CD4-positive, alpha-beta T cell (primary cell): ENCODE measurements at regions of chr3 and their contacts with region 1.

Region 1: GRCh38 chr3:195271116-195271858 is at the start of gene XXYLT1:
- DNase-seq: peak; percentile 82 to 94 (median 88)
- ATAC-seq: peak; percentile 84
- H3K4me3 ChIP-seq: peak within 1 kb of the TSS; percentile 69
- H3K4me3 Mint-ChIP-seq: peak within 1 kb of the TSS; percentile 95
- H3K27ac ChIP-seq: peak within 1 kb of the TSS in 1 of 2 donors; percentile 38
- H3K27ac Mint-ChIP-seq: peak within 1 kb of the TSS; percentile 80
- H3K4me1 ChIP-seq: peaks cover 31% of the 10 kb centered on the region
- H3K4me1 Mint-ChIP-seq: peaks cover 15% of the 10 kb centered on the region
- H3K27me3 ChIP-seq: no peaks in the 10 kb centered on the region
- H3K27me3 Mint-ChIP-seq: no peaks in the 10 kb centered on the region
- CTCF ChIP-seq: peak; percentile 88
- total RNA-seq, gene XXYLT1: 3.1 to 3.7 TPM

Region 2: DNA sequence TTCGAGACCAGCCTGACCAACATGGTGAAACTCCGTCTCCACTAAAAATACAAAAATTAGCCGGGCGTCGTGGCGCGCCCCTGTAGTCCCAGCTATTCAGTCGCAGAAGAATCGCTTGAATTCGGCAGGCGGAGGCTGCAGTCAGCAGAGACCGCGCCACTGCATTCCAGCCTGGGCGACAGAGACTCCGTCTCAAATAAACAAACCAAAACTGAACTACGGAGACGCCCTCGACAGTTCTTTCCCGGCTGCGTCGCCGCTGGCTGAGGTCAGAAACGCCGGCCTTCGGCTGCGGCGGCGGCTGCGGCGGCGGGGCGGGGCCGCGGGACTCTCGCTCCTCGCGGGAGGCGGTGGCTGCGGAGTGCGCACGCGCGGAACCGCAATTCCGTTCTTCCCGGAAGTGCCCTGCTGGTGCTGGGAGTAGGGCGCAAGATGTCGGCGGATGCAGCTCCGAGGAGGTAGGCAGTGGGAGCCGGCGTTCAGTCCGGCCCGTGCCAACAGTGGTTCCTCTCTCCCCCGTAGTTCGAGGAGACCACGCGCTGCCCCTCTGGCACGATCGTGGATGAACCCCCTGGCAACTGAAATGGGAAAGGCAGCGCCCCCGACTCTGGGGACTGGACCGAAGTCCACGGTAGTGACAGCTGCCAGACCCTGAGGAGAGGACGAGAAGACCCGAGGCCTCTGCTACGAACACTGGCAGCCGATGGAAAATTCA is 687.5 kb before region 1 on chr3:
- CTCF ChIA-PET with region 1: no interaction called
- POLR2A ChIA-PET with region 1: no interaction called
- intact Hi-C with region 1: loop called in 1 of 2 experiments (anchors 5 kb)
- DNase-seq: peak; percentile 84 to 96 (median 92)
- ATAC-seq: peak; percentile 94
- H3K4me3 ChIP-seq: peak overlapping the region; percentile 61
- H3K4me3 Mint-ChIP-seq: peak overlapping the region; percentile 94
- H3K27ac ChIP-seq: peak overlapping the region; percentile 68 to 69
- H3K27ac Mint-ChIP-seq: peak overlapping the region; percentile 95
- H3K4me1 ChIP-seq: peaks cover 14% of the 10 kb centered on the region
- H3K4me1 Mint-ChIP-seq: peaks cover 15% of the 10 kb centered on the region
- H3K27me3 ChIP-seq: no peaks in the 10 kb centered on the region
- H3K27me3 Mint-ChIP-seq: no peaks in the 10 kb centered on the region
- CTCF ChIP-seq: no peak

Region 3: GRCh38 chr3:195282961-195283360 is 11.7 kb after region 1 on chr3:
- CTCF ChIA-PET with region 1: interaction called, 19 read pairs
- POLR2A ChIA-PET with region 1: interaction called, 5 read pairs
- intact Hi-C with region 1: no loop called
- DNase-seq: no peak
- ATAC-seq: no peak
- H3K4me3 ChIP-seq: no peak overlapping the region
- H3K4me3 Mint-ChIP-seq: no peak overlapping the region
- H3K27ac ChIP-seq: no peak overlapping the region
- H3K27ac Mint-ChIP-seq: no peak overlapping the region
- H3K4me1 ChIP-seq: no peaks in the 10 kb centered on the region
- H3K4me1 Mint-ChIP-seq: peaks cover 5% of the 10 kb centered on the region
- H3K27me3 ChIP-seq: no peaks in the 10 kb centered on the region
- H3K27me3 Mint-ChIP-seq: no peaks in the 10 kb centered on the region
- CTCF ChIP-seq: no peak

Region 4: DNA sequence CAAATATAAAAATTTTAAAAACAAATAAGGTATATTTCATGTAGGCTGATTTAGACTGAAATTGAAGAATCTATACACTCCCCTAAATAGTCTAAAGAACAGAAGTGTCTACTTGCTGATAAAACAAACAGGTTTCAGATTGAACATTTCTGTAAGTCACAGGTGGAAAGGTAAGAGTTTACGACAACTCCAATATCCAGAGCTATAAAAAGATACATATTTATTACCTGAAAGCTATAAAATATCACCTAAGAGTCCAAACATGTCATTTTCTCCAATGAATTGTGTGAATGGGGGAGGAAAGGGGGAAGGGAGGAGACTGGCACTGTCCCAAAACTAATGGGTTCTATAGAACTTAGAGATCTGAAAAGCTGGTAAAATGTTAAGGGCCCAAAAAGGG is 245.7 kb after region 1 on chr3:
- CTCF ChIA-PET with region 1: interaction called, 26 read pairs
- POLR2A ChIA-PET with region 1: interaction called, 24 read pairs
- intact Hi-C with region 1: loop called (anchors 1 kb)
- DNase-seq: no peak
- ATAC-seq: no peak
- H3K4me3 ChIP-seq: no peak overlapping the region
- H3K4me3 Mint-ChIP-seq: no peak overlapping the region
- H3K27ac ChIP-seq: no peak overlapping the region
- H3K27ac Mint-ChIP-seq: no peak overlapping the region
- H3K4me1 ChIP-seq: peaks cover 3% of the 10 kb centered on the region
- H3K4me1 Mint-ChIP-seq: peaks cover 45% of the 10 kb centered on the region
- H3K27me3 ChIP-seq: no peaks in the 10 kb centered on the region
- H3K27me3 Mint-ChIP-seq: no peaks in the 10 kb centered on the region
- CTCF ChIP-seq: no peak

Region 5: DNA sequence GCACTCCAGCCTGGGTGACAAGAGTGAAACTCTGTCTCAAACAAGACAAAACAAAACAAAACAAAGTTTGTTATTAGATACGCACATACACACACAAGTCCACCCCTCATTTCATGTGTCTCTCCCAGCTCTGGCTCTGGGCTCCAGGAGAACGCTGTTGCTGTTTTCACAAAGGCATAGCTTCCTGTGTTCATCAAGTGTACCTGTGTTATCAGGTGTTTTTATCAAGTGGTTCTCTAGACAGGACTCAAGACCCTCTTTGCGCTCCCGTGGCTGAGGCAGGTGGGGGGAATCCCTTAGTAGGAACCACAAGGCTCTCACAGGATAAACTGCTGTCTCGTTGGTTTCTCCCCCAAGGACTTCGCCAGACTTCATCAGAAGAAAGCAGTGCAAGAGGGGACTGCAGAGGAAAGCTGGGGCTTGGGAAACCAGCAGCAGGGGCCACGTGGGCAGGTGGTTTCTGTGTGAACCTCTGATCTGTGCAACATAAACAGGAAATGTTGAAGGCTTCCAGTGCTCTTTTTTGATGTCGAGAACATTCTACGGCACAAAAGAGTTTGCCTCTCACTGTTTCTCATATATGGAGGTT is 278.7 kb after region 1 on chr3:
- CTCF ChIA-PET with region 1: interaction called, 12 read pairs
- POLR2A ChIA-PET with region 1: interaction called, 36 read pairs
- intact Hi-C with region 1: no loop called
- DNase-seq: peak; percentile 69 to 94 (median 80)
- ATAC-seq: peak; percentile 78
- H3K4me3 ChIP-seq: peak overlapping the region; percentile 45
- H3K4me3 Mint-ChIP-seq: peak overlapping the region; percentile 83
- H3K27ac ChIP-seq: peak overlapping the region; percentile 80 to 81
- H3K27ac Mint-ChIP-seq: peak overlapping the region; percentile 93
- H3K4me1 ChIP-seq: peaks cover 92% of the 10 kb centered on the region
- H3K4me1 Mint-ChIP-seq: peaks cover 93% of the 10 kb centered on the region
- H3K27me3 ChIP-seq: no peaks in the 10 kb centered on the region
- H3K27me3 Mint-ChIP-seq: no peaks in the 10 kb centered on the region
- CTCF ChIP-seq: no peak

Region 6: DNA sequence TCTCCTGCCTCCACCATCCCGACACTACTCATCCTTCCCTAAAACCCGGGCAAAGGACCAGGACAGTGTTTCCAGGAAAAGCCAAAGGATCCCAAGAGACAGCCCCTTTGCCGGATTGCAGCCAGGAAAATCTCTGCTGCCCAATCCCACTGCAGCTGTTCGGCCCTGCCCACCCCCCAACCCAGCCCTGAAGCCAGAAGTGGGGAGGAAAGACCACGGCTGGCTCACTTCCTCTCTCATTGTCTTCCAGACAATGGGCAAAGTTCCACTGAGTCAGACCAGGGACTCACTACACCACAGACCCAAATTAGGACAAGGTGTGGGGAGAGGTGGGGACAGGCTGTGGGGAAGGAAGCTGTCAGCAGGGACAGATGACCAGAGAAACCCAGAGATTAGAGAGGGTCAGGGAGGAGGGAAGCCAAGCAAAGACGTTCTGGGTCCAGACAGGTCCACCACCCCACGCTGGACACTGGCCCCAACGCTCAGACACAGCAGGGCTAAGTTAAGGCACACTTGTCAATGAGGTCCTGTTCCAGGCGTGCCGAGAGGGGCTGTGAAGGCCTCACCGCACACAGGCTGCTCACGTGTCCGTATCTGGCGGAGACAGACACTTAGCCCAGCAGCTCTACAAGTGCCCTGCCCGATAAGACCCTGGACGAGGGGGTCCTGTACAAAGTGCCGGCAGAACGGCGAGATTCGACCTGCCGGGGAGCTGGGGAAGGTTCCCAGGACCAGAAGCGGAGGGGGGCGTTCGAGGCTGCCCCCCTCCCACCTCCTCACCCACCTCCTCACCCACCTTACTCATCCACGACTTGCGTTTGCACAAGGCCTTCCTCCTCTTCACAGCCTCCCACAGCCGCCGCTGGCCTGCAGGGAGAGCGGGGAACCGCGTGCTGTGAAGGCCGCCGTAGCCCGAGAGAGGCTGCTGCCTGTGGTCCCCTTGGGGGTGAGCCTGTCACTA is 615.2 kb after region 1 on chr3:
- CTCF ChIA-PET with region 1: no interaction called
- POLR2A ChIA-PET with region 1: no interaction called
- intact Hi-C with region 1: no loop called
- DNase-seq: no peak
- ATAC-seq: no peak
- H3K4me3 ChIP-seq: no peak overlapping the region
- H3K4me3 Mint-ChIP-seq: no peak overlapping the region
- H3K27ac ChIP-seq: no peak overlapping the region
- H3K27ac Mint-ChIP-seq: no peak overlapping the region
- H3K4me1 ChIP-seq: peaks cover 6% of the 10 kb centered on the region
- H3K4me1 Mint-ChIP-seq: no peaks in the 10 kb centered on the region
- H3K27me3 ChIP-seq: no peaks in the 10 kb centered on the region
- H3K27me3 Mint-ChIP-seq: no peaks in the 10 kb centered on the region
- CTCF ChIP-seq: no peak

Region 7: GRCh38 chr3:195909644-195910508 is 638.6 kb after region 1 on chr3:
- CTCF ChIA-PET with region 1: interaction called, 3 read pairs
- POLR2A ChIA-PET with region 1: no interaction called
- intact Hi-C with region 1: loop called in 1 of 2 experiments (anchors 2 kb)
- DNase-seq: peak; percentile 84 to 97 (median 92)
- ATAC-seq: peak; percentile 55
- H3K4me3 ChIP-seq: peak overlapping the region; percentile 51
- H3K4me3 Mint-ChIP-seq: peak overlapping the region; percentile 85
- H3K27ac ChIP-seq: peak overlapping the region; percentile 44 to 59
- H3K27ac Mint-ChIP-seq: peak overlapping the region; percentile 72
- H3K4me1 ChIP-seq: peaks cover 53% of the 10 kb centered on the region
- H3K4me1 Mint-ChIP-seq: peaks cover 37% of the 10 kb centered on the region
- H3K27me3 ChIP-seq: no peaks in the 10 kb centered on the region
- H3K27me3 Mint-ChIP-seq: no peaks in the 10 kb centered on the region
- CTCF ChIP-seq: no peak